Aorta (tissue), 5 donors: ENCODE measurements at regions of chr5 and their contacts with region 1.

Region 1: DNA sequence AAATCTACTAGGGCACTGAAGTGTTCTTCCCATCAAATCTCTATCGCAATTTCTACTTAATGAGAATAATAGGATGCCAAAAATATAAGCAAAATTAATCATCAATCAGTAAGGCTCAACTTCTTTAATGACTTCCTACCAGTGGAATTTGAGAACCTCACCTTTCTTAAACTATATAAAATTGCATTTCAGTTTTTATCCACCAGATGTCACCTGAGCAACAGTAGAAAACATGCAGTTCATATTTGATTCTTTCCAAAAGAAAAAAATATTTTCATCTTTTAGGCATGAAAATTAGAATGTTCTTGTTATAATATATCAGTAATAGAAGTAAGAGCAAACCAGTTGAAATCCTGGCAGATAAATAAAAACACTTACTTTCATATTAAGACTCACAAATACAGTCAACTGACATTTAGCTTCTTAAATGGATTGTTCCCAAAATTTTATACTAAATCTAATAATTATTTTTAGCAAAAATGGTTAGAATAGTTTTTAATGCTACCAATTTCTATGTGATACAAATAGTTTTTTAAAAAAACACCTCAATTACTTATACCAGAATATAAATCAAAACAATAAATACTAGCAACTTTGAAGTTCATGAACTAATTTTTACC is 13.4 kb upstream of the CCDC112 start:
- DNase-seq: no peak
- ATAC-seq: no peak
- H3K4me3 ChIP-seq: no peak overlapping the region
- H3K27ac ChIP-seq: no peak overlapping the region
- H3K4me1 ChIP-seq: no peaks in the 10 kb centered on the region
- H3K27me3 ChIP-seq: no peaks in the 10 kb centered on the region

Region 2: DNA sequence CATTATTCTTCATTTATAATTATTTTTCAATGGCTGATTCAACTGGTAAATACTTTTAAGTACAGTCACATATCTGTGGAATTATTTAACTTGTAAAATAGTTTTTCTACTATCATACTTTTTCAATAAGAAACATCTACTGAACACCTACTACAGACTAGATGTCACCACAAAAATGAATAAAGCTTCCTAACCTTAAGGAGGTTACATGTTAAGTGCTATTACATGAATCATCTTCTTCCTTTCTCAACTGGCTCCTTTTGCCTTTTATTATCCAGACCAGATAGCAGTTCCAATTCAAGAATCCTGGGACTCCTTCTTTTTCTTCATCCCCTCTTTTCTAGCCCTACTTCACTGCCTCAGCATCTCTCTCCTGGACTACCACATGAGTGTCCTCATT is 51.9 kb before region 1 on chr5:
- intact Hi-C with region 1: no loop called
- DNase-seq: no peak
- ATAC-seq: no peak
- H3K4me3 ChIP-seq: no peak overlapping the region
- H3K27ac ChIP-seq: no peak overlapping the region
- H3K4me1 ChIP-seq: peaks cover 2 to 3% of the 10 kb centered on the region in 2 donors
- H3K27me3 ChIP-seq: no peaks in the 10 kb centered on the region

Region 3: DNA sequence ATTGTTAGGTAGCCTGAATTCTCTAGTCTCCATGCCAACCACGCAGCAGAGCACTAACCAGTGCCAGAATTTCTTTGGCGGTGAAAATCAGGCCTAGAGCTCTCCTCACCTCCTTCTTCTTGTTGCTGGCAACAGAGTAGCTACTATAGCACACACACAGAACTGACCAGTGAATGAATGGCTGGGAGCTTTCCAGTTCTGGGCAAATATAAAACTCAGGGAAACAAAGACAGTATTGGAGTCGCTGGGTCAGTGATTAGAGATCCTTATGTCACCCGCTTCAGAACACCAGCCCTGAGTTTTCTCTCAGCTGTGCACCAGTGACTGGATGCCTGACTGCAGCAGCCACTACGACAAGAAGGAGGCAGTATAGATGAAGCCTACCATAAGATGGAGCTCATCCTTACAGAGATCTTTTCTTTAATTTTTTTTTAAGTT is 261.6 kb after region 1 on chr5:
- intact Hi-C with region 1: loop called (anchors 5 kb)
- DNase-seq: no peak
- ATAC-seq: peak; percentile 64
- H3K4me3 ChIP-seq: no peak overlapping the region
- H3K27ac ChIP-seq: no peak overlapping the region
- H3K4me1 ChIP-seq: peaks cover 0 to 1% of the 10 kb centered on the region in 2 donors
- H3K27me3 ChIP-seq: no peaks in the 10 kb centered on the region

Region 4: DNA sequence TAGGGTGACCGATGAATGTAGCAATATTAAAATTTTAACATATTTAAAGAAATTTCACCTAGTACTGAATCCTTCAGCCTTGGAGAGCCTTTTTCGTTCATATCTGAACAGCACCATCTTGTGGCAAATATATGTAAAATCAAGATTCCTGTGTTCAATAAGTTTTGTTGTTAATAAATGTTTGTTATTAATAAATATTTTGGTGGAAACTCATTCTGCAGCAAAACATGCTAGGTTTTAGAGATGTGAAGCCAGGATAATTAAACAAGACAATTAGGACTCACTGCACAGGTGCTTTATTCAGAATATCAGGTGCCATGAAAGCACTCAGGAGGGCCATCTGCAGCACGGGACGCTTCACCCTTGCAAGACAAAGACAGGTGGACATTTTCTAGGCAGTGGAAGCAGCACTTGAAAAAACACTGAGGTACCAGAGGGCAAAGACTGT is 276.8 kb after region 1 on chr5:
- intact Hi-C with region 1: loop called (anchors 2 to 5 kb)
- DNase-seq: no peak
- ATAC-seq: no peak
- H3K4me3 ChIP-seq: no peak overlapping the region
- H3K27ac ChIP-seq: no peak overlapping the region
- H3K4me1 ChIP-seq: no peaks in the 10 kb centered on the region
- H3K27me3 ChIP-seq: no peaks in the 10 kb centered on the region

Region 5: GRCh38 chr5:115831163-115831768 is 521.4 kb after region 1 on chr5:
- intact Hi-C with region 1: loop called in 1 of 2 experiments (anchors 10 kb)
- DNase-seq: no peak
- ATAC-seq: no peak
- H3K4me3 ChIP-seq: no peak overlapping the region
- H3K27ac ChIP-seq: no peak overlapping the region
- H3K4me1 ChIP-seq: no peaks in the 10 kb centered on the region
- H3K27me3 ChIP-seq: no peaks in the 10 kb centered on the region